ENCODE measurements at regions of chr18 and their contacts with region 1.

Region 1: DNA sequence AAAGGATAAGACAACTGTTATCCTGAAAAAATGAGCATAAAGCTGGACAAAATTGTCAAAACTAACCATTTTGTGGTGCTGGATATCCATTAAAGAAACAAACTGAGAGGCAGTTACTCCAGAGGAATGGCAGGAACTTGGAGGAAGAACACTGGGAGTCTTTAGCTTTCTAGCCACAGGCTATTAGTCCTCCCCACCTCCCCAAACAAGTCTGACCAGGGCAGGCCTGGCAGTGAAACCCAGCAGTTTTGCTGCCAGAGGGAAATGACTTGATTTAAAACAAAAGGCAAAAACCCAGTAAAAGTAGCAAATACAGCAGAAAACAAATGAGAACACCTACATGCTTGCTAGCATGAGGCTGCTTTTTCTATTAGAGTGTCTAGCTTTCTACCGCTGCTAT is 34.9 kb downstream of the OSBPL1A start:
- DNase-seq: no peak
- H3K4me3 ChIP-seq: no peak overlapping the region
- H3K27ac ChIP-seq: no peak overlapping the region
- H3K27me3 ChIP-seq: no peaks in the 10 kb centered on the region
- CTCF ChIP-seq: no peak

Region 2: DNA sequence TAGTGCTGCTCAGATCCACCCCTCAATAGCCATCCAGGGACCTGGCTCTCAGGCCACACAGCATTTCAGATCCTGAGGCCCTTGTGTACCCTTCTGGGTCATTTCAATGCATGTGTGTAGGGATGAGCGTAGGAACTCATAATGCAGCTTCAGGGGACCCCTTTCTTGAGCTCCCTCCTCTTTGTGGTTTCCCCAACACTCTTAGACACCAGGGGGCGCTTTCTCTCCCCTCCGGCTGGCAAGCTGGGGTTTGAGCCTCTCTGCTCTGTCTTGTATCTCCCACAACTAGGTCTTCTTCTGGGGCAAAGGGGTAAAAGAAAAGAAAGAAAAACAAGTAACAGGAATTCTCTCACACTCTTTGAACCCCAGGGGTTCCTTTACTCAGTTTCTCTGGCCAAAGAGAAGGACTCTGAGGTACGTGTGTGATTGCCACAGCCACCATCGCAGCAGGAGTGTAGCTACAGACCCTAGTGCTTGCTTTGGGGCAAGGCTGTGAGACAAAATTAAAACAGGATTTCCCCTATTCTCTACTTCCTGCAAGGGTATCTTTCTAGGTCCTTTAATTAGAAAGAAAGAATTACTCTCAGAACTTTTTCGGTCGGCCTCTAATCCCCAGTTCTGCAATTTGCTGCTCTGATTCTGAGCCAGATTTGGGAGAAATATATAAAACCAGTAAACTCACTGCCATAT is 185.9 kb before region 1 on chr18:
- CTCF ChIA-PET with region 1: interaction called, 18 read pairs
- POLR2A ChIA-PET with region 1: no interaction called
- DNase-seq: peak; percentile 10
- H3K4me3 ChIP-seq: no peak overlapping the region
- H3K27ac ChIP-seq: no peak overlapping the region
- H3K27me3 ChIP-seq: no peaks in the 10 kb centered on the region
- CTCF ChIP-seq: peak; percentile 82

Region 3: DNA sequence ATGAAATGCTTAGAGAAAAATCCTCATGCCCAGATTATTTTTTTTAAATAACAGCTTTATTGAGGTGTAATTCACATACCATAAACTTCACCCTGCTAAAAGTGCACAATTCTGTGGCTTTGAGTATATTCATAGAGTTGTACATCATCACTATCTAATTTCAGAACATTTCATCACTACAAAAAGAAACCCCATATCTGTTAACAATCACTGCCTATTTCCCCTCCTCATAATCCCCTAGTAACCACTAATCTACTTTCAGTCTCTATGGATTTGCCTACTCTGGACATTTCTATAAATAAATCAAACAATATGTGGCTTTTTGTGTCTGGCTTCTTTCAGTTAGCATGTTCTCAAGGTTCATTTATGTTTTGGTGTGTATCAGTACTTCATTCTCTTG is 16.5 kb before region 1 on chr18:
- CTCF ChIA-PET with region 1: interaction called, 21 read pairs
- POLR2A ChIA-PET with region 1: no interaction called
- DNase-seq: no peak
- H3K4me3 ChIP-seq: no peak overlapping the region
- H3K27ac ChIP-seq: no peak overlapping the region
- H3K27me3 ChIP-seq: no peaks in the 10 kb centered on the region
- CTCF ChIP-seq: no peak

Region 4: DNA sequence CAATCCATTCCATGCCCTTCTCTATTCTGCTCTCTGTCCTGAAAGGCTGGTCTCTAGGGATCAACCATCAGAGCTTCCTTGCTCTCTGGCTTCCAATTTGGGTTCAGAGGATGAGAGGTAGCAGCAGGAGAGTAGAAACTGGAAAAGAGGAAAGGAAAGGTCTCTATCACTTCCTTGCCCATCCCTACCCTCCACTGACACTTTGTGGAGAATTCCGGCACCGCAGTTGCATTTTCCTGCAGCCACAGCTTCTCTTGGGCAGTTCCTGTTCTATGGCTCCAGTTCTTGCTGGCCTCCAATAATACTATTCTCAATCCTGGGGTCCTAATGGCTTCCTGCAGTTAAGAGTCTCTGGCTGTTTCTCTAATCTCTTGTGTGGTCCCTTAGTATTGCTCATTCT is 50.4 kb after region 1 on chr18:
- CTCF ChIA-PET with region 1: interaction called, 51 read pairs
- POLR2A ChIA-PET with region 1: no interaction called
- DNase-seq: no peak
- H3K4me3 ChIP-seq: no peak overlapping the region
- H3K27ac ChIP-seq: no peak overlapping the region
- H3K27me3 ChIP-seq: peaks cover 26% of the 10 kb centered on the region
- CTCF ChIP-seq: peak; percentile 53

Region 5: DNA sequence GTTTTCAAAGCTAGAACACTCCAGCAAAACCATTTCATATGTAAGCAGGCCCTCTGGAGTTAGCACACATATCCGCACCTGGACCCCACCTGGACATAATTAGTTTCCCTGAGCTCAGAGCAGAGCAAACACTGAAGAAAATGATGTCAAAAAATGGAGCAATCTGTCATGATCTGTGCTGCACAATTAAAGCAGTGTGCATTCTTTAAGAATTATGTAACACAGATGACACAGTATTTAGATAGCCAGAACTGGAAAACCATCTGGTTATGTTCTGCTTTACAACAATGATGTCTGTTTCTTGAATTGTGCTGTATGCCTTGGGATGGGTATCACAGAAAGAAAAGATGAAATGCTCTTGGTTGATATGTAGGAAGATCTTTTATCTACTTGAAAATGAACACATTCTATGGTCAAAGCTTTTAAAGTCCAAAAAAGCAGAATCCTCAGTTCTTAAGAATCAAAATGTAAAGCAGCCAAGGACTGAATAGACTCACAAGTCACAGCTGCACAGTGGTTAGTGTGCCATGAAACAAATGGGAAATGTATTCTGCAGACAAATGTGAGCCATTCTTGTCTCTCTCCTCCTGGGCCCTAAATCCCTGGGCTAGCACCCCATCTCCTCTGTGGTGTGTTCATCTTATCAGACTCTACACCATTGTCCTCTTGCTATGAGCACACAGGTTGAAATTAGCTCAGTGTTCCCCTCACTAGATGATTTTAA is 134.4 kb after region 1 on chr18:
- CTCF ChIA-PET with region 1: interaction called, 15 read pairs
- POLR2A ChIA-PET with region 1: no interaction called
- DNase-seq: no peak
- H3K4me3 ChIP-seq: no peak overlapping the region
- H3K27ac ChIP-seq: no peak overlapping the region
- H3K27me3 ChIP-seq: peaks cover 10% of the 10 kb centered on the region
- CTCF ChIP-seq: no peak

Measured in AG04450 (cell line).